ENCODE measurements at regions of chr3 and their contacts with region 1.

Region 1: DNA sequence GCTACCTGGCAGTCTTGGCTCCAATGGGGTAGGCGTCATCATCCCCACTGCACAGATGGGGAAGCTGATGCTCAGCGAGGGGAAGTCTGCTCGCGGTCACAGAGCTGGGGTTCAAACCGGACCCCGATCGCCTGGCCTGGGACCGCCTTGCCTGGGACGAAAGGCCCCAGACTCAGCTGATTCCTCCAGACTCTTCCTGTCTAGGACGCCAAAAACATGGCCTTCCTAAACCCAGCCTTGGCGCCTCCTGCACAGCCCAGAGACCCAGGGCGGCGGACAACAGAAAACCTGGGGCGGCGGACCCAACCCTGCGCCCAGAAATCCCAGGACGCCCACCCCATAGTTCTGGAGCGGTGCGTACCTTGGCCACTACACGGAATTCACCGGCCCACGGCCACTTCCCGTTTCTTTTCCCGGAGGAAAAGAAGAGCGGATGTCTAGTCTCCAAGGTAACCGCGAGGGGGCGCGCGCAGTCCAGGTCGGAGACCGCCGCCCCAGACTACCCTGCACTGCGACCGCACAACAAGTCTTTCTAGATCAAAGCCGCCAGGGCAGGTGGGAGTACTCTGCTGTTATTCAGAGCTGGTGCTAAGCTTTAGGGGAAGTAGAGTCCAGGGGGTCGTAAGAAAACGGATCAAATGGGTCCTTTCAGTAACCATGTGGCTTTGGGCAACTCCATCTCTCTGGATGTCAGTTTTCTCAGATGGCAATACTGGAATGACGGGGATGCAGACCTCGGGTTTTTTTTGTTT is 4.9 kb upstream of the IL17RD start:
- DNase-seq: peak; percentile 75
- H3K4me3 Mint-ChIP-seq: peak overlapping the region; percentile 48
- H3K27ac Mint-ChIP-seq: no peak overlapping the region
- H3K4me1 Mint-ChIP-seq: peaks cover 13% of the 10 kb centered on the region
- H3K27me3 Mint-ChIP-seq: peaks cover 82% of the 10 kb centered on the region

Region 2: GRCh38 chr3:56988458-56989168 is 181.4 kb before region 1 on chr3:
- CTCF ChIA-PET with region 1: no interaction called
- DNase-seq: peak; percentile 79
- H3K4me3 Mint-ChIP-seq: no peak overlapping the region
- H3K27ac Mint-ChIP-seq: no peak overlapping the region
- H3K4me1 Mint-ChIP-seq: peaks cover 27% of the 10 kb centered on the region
- H3K27me3 Mint-ChIP-seq: peaks cover 27% of the 10 kb centered on the region

Region 3: DNA sequence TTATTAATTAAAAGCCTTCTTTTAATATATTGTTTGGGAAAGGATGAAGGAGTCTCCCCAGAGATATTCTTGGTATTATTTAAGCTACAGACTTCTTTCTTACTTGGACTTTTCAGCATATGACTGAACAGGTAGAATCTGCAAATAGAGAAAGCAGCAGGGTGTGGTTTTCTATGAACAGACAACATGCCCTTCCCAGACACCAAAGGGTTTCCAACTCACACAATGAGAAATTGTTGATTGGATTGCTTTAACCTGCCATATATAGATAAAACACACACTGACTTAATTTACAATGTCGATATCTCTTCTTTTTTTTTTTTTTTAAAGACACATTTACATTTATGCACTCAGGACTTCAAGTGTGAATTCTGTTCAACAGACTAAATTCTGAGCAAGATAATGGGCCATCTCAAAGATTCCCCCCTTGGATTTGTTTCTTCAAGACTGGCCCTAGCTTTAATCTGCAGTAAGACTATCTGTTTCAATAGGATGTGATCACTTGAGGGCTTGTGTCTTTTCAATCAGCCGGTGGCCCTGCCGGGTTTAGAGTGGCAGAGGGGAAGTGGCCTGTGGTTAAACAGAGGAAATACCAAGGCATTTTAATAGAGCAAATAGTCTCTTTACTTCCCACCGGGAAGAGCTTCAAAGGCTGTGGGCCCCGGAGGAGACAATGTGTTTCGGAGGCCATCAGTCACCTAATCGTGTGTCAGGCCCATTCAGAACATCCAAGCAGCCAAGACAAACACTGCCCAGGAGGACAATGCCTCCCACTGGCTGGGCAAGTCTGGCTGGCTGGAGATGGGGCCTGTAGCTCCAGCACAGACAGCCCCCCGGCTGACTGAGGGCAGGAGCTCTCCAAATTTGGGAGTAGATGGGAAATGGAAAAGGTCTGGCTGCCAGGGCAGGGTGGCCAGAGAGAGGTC is 11.0 kb before region 1 on chr3:
- CTCF ChIA-PET with region 1: interaction called, 17 read pairs
- DNase-seq: peak; percentile 45
- H3K4me3 Mint-ChIP-seq: no peak overlapping the region
- H3K27ac Mint-ChIP-seq: no peak overlapping the region
- H3K4me1 Mint-ChIP-seq: peaks cover 15% of the 10 kb centered on the region
- H3K27me3 Mint-ChIP-seq: peaks cover 84% of the 10 kb centered on the region